AG04450 (cell line): ENCODE measurements at regions of chr11 and their contacts with region 1.

Region 1: GRCh38 chr11:17730608-17731462 is 3.7 kb upstream of the KCNC1 start:
- DNase-seq: peak; percentile 33
- H3K4me3 ChIP-seq: no peak overlapping the region
- H3K27ac ChIP-seq: no peak overlapping the region
- H3K27me3 ChIP-seq: peaks cover 35% of the 10 kb centered on the region
- CTCF ChIP-seq: peak; percentile 97

Region 2: GRCh38 chr11:17711836-17712235 is 19.0 kb before region 1 on chr11:
- CTCF ChIA-PET with region 1: interaction called, 12 read pairs
- POLR2A ChIA-PET with region 1: no interaction called
- DNase-seq: no peak
- H3K4me3 ChIP-seq: no peak overlapping the region
- H3K27ac ChIP-seq: no peak overlapping the region
- H3K27me3 ChIP-seq: peaks cover 36% of the 10 kb centered on the region
- CTCF ChIP-seq: no peak

Region 3: DNA sequence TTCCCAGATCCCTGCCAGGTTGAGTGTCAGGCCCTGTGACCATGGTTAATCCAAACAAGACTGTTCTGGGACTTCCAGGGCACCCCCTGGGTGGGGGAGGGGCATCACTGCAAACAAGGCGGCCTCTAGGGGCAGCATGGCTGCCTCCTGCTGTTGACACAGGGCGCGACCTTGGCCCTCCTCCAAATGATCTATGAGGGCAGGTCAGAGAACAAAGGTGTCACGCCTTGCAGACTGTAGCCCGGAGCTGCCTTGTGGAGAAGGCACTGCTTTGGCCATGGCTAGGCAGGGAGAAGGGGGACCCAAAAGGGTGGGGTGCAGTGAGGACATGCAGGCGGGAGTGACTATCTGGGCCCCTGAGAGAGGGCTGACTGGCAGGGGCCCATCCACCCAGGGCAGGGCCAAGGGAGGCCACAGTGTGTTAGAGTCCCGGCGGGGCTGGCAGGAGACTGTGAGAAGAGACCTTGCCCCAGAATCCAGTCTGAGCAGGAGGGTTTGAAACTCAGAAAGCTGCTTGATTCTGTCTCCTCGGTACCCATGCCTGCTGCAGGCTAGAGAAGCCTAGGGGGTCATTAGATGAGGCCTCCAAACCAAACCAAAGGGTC is 39.3 kb after region 1 on chr11:
- CTCF ChIA-PET with region 1: interaction called, 10 read pairs
- POLR2A ChIA-PET with region 1: no interaction called
- DNase-seq: no peak
- H3K4me3 ChIP-seq: no peak overlapping the region
- H3K27ac ChIP-seq: no peak overlapping the region
- H3K27me3 ChIP-seq: peaks cover 6% of the 10 kb centered on the region
- CTCF ChIP-seq: no peak

Region 4: GRCh38 chr11:17960091-17960490 is 229.3 kb after region 1 on chr11:
- CTCF ChIA-PET with region 1: interaction called, 22 read pairs
- POLR2A ChIA-PET with region 1: no interaction called
- DNase-seq: no peak
- H3K4me3 ChIP-seq: no peak overlapping the region
- H3K27ac ChIP-seq: no peak overlapping the region
- H3K27me3 ChIP-seq: no peaks in the 10 kb centered on the region
- CTCF ChIP-seq: no peak

Region 5: DNA sequence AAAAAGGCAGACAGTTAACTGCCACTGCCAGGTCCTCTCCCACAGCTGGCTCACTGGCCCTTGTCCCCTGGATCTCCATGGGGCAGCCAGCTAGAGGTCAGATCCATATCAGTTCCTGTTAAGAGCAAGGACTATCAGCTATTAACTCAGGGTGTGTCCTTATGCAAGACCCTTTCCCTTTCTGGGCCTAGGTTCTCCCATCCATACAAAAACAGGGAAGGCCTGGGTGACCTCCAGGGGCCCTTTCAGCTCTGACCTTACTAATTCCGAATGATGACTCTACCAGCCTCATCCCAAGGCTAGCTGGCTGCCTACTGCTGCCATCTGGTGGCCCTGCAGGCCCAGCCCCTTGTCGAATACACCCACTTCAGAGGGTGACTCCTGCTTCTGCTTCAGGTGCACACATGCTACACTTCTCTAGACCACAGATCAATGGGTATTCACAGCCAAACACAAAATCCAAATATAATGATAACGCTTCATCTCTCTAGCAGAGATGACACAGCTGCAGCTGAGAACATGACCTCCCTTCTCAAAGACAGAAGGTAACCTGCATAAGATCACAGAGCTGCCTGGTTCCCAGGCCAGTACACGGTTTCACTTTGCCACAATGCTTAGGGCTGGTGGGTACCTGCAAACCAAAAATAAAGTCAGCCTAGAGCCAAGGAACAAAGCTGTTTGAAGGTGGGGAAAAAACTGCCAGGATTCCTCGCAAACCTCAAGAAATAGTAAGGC is 247.9 kb after region 1 on chr11:
- CTCF ChIA-PET with region 1: interaction called, 678 read pairs
- POLR2A ChIA-PET with region 1: interaction called, 6 read pairs
- DNase-seq: no peak
- H3K4me3 ChIP-seq: no peak overlapping the region
- H3K27ac ChIP-seq: no peak overlapping the region
- H3K27me3 ChIP-seq: no peaks in the 10 kb centered on the region
- CTCF ChIP-seq: peak; percentile 92